OCI-LY7 (cell line): ENCODE measurements at regions of chr7 and their contacts with region 1.

Region 1: DNA sequence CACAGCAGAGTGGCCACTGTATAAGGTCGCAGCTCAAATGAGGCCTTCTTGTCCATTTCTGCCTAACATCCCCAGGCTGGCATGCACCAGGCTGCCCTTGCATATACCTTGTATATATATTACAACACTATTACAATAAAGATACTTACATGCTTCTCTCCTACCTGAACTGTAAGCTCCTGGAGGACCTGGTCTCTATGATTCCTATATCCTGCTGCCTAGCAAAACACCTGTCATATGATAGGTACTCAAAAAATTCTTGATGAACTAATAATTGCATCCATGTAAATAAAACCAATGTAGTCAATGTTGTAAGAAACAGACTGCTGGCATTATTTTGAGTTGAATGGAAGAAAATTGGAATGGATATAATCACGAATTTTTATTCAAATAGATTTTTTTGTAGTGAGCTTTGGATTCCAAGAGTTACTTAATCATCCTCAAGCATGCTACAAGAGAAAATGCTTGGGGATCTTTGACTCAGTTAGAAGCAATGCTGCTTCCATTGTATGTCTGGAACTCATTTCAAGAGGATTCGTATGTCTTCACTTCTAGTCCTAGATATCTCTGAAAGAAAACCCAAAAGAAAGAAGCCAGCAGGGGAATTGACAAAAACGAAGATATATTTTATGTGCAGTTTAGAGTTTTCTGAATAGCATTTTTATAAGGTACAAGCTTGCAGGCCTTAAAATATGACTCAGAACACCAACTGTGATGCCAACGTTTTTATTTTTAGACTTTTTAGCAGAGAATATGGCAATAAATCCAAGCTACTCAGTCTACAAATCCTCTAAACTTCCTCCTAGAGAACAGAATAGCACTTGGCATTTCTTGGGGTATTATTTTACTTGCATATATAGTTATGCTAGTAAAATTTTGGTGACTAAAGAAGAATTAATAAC is 53.1 kb downstream of the OSBPL3 start:
- DNase-seq: no peak
- H3K4me3 ChIP-seq: no peak overlapping the region
- H3K27ac ChIP-seq: no peak overlapping the region
- H3K4me1 ChIP-seq: peaks cover 58% of the 10 kb centered on the region
- CTCF ChIP-seq: no peak

Region 2: DNA sequence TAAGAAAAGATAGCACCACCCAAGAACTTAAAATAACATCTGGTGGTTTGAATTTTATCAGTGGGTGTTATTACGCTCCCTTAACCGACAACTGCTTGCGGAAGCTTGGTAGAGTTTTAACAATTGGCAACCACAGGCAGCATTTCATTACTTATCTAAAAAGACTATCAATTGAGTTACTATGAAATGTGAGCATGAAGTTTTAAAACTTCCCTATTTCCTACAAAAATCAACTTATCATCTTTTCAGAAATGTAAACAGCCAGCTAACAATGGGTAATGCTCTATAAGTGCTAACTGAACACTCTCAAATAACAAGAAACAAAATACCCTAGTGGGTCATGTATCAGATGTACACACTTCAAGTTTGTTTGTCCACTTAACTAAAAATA is 15.7 kb before region 1 on chr7:
- CTCF ChIA-PET with region 1: no interaction called
- POLR2A ChIA-PET with region 1: interaction called, 13 read pairs
- intact Hi-C with region 1: no loop called
- DNase-seq: peak; percentile 61
- H3K4me3 ChIP-seq: peak overlapping the region; percentile 29
- H3K27ac ChIP-seq: peak overlapping the region; percentile 72
- H3K4me1 ChIP-seq: peaks cover 96% of the 10 kb centered on the region
- CTCF ChIP-seq: no peak